ENCODE measurements at regions of chr17 and their contacts with region 1.

Region 1: DNA sequence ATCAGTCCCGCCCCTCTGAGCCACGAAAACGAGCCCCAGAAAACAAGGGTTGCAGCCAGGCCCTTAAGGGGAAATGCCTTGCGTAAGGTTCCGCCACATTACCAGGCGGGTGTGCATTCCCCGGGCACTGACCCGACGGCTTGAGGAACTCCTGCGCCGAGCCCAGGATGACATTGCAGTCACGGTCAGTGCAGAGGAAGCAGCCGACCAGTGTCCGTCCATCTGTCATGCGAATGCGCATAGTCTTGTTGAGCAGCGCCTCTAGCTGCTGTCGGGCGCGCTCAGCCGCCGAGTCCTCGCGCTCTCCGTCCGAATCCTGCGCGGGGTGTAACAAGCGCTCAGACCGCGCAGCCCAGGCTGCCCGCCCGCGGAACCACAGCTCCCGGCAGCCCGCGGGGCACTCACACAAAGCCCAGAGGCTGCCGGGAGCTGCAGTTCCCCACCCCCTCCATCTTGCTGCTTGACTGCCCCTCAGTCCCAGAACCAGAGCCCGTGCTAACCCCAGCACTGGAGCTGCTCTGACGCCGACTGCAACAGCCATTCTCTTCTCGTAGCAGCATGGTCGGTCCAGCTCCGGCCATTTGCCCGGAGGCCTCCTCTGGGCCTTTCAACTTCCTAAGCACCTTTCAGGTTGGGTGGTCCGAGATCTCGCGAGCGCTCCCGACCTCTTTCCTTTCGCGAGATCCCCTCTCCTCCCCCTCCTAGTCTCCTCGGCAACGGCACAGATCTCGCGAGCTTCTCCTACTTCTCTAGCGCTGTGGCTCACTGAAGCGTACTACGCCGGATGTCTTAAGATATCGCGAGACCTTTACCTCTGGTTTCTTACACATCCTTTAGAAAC is at the start of gene NAA38:
- DNase-seq: peak; percentile 96 to 98 (median 97)
- ATAC-seq: peak; percentile 87 to 90 (median 90)
- H3K4me3 ChIP-seq: peak within 1 kb of the TSS; percentile 39 to 85 (median 68)
- H3K27ac ChIP-seq: peak within 1 kb of the TSS; percentile 74 to 97 (median 92)
- H3K4me1 ChIP-seq: peaks cover 0 to 45% (median 33%) of the 10 kb centered on the region in 12 donors
- H3K27me3 ChIP-seq: no peaks in the 10 kb centered on the region
- CTCF ChIP-seq: peak in 10 of 12 donors; percentile 12 to 74 (median 44)
- POLR2A ChIP-seq: peak in 1 of 2 donors; percentile 32
- total RNA-seq, gene NAA38: 60.9 to 141 (median 72.4) TPM

Region 2: DNA sequence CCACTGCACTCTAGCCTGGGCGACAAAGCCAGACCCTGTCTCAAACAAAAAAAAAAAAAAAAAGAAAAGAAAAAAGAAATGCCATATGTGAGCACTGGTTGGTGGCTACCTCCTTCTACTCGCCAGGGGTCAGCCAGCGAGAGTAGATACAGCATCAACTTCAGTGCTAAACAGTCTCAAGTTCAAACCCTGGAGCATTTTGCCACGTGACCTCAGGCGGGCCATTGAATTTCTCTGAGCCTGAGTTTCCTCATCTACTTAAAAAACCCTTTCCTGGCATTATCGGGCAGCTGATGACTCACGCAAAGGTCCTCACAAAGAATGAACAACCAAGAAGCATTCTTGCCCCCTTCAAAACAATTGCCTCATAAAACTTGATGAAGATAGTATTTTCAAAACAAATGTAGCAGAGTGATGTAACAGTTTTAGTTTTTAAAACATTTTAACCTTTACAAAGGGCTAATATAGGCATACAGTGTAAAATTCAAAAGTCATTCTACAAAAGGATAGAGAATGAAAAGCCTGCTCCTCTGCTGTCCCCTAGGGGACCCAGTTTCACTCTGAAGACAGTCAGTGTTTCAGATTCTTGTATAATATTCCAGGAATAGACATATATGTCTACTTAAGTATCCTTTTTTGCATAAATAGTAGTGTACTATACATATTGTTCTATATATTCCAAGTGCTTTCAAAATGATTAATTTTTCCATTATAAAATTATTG is 111.2 kb before region 1 on chr17:
- intact Hi-C with region 1: loop called in 9 of 10 experiments (anchors 5 to 10 kb)
- DNase-seq: no peak
- ATAC-seq: no peak
- H3K4me3 ChIP-seq: no peak overlapping the region
- H3K27ac ChIP-seq: no peak overlapping the region
- H3K4me1 ChIP-seq: peaks cover 0 to 10% (median 5%) of the 10 kb centered on the region in 12 donors
- H3K27me3 ChIP-seq: peaks cover 0 to 5% (median 0%) of the 10 kb centered on the region in 9 donors
- CTCF ChIP-seq: no peak
- POLR2A ChIP-seq: no peak

Region 3: DNA sequence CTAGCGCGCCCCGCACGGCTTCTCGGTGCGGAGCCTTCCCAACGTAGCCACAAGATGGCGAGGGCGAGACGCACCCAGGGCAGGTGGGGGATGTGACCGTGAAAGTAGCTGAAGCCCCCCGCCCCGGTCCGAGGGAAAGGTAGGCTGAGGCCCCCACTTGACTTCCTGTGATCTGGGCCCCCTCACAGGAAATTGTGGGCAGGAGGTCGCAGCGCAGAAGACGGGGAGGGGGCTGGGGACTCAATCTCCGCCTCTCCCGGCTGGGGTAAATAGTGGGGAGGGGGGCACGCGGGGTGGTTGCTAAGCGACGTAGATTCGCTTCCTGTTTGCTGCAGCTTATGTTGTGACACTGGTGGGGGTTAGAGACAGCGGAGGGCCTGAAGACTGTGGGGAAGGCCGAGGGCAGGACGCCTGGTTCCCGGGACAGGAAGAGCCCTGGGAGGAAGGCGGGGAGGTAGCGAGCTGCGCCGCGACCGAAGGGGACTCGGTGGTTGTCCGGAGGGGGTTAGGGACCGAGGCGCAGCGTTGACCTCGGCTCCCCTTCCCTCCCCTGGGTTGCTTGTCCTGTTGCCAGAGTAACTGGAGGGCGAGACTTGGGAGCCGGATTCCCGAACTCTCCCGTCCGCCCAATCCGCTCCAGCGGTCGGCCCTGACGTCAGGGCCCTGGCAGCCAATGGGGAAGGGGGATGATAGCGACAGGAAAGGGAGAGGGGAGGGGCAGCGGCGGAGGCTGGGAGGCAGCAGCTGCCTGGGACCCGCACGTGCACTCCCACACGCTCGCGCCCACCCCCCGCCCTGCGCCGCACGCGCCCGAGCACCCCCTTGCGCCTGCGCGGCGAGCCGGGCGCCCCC is 21.9 kb before region 1 on chr17:
- intact Hi-C with region 1: loop called in 5 of 10 experiments (anchors 1 to 2 kb)
- DNase-seq: peak; percentile 98 to 99 (median 99)
- ATAC-seq: peak; percentile 79 to 84 (median 82)
- H3K4me3 ChIP-seq: peak overlapping the region; percentile 59 to 99 (median 80)
- H3K27ac ChIP-seq: peak overlapping the region; percentile 86 to 100 (median 98)
- H3K4me1 ChIP-seq: peaks cover 0 to 56% (median 35%) of the 10 kb centered on the region in 12 donors
- H3K27me3 ChIP-seq: no peaks in the 10 kb centered on the region
- CTCF ChIP-seq: peak; percentile 56 to 94 (median 80)
- POLR2A ChIP-seq: peak; percentile 31 to 71

Region 4: GRCh38 chr17:7887482-7888183 is 30.5 kb after region 1 on chr17:
- intact Hi-C with region 1: loop called in 3 of 10 experiments (anchors 2 kb)
- DNase-seq: peak; percentile 93 to 95 (median 95)
- ATAC-seq: peak; percentile 79 to 87 (median 86)
- H3K4me3 ChIP-seq: peak overlapping the region; percentile 8 to 86 (median 76)
- H3K27ac ChIP-seq: peak overlapping the region; percentile 72 to 98 (median 91)
- H3K4me1 ChIP-seq: peaks cover 17 to 63% (median 45%) of the 10 kb centered on the region in 12 donors
- H3K27me3 ChIP-seq: no peaks in the 10 kb centered on the region
- CTCF ChIP-seq: no peak
- POLR2A ChIP-seq: peak in 1 of 2 donors; percentile 50

Region 5: GRCh38 chr17:7931709-7932482 is 74.8 kb after region 1 on chr17 and contains the starts of genes CNTROB and TRAPPC1:
- intact Hi-C with region 1: loop called in 1 of 10 experiments (anchors 5 kb)
- DNase-seq: peak; percentile 100
- ATAC-seq: peak; percentile 99 to 100 (median 99)
- H3K4me3 ChIP-seq: peak within 1 kb of the TSS; percentile 65 to 97 (median 80)
- H3K27ac ChIP-seq: peak within 1 kb of the TSS in 11 of 12 donors; percentile 52 to 88 (median 80)
- H3K4me1 ChIP-seq: peaks cover 2 to 30% (median 19%) of the 10 kb centered on the region in 12 donors
- H3K27me3 ChIP-seq: no peaks in the 10 kb centered on the region
- CTCF ChIP-seq: no peak
- POLR2A ChIP-seq: peak in 1 of 2 donors; percentile 73
- total RNA-seq, gene CNTROB: 7.9 to 19.2 (median 9.7) TPM
- total RNA-seq, gene TRAPPC1: 60.8 to 170 (median 125) TPM

Region 6: DNA sequence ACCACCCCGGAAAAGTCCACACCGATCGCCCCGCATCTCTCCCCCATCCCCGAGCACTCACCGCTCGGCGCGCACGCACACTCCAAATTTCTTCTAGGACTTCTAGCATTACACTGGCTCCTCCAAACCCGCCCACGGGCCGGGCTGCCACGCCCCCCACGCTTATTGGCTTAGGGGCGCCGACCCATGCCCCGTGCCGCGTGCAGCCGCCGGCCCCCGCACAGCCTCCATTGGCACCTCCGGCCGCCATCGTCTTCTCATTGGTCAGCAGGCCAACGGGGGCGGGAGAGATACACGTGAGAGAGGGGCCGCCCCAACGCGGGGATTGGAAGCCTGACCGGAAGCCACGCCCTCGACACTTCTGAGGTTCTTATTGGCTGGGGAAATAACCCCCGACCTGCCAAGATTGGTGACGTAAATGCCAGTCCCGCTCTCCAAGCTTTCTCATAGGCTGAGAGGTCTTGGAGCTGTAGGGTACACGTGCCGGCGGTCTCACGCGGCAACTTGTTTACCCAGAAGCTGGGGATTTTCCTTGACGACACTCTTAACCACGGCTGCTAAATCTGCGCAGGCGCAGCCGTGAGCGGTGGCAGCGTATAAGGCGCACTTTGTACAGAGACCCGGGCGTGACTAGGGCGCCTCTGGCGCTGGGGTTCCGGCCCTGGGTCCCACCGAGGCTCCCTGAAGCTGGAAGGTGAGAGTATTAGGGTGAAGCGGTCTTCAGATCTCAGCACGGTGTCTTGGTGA is 299.3 kb after region 1 on chr17:
- intact Hi-C with region 1: loop called in 1 of 10 experiments (anchors 10 kb)
- DNase-seq: peak; percentile 100
- ATAC-seq: peak; percentile 59 to 77 (median 61)
- H3K4me3 ChIP-seq: peak overlapping the region; percentile 69 to 97 (median 86)
- H3K27ac ChIP-seq: peak overlapping the region; percentile 98 to 100 (median 100)
- H3K4me1 ChIP-seq: peaks cover 20 to 79% (median 36%) of the 10 kb centered on the region in 12 donors
- H3K27me3 ChIP-seq: no peaks in the 10 kb centered on the region
- CTCF ChIP-seq: peak in 3 of 12 donors; percentile 16 to 36 (median 28)
- POLR2A ChIP-seq: peak; percentile 97 to 100

Measured in heart left ventricle (tissue), 16 donors.